Left lung (tissue), 14 donors: ENCODE measurements at regions of chr19 and their contacts with region 1.

Region 1: DNA sequence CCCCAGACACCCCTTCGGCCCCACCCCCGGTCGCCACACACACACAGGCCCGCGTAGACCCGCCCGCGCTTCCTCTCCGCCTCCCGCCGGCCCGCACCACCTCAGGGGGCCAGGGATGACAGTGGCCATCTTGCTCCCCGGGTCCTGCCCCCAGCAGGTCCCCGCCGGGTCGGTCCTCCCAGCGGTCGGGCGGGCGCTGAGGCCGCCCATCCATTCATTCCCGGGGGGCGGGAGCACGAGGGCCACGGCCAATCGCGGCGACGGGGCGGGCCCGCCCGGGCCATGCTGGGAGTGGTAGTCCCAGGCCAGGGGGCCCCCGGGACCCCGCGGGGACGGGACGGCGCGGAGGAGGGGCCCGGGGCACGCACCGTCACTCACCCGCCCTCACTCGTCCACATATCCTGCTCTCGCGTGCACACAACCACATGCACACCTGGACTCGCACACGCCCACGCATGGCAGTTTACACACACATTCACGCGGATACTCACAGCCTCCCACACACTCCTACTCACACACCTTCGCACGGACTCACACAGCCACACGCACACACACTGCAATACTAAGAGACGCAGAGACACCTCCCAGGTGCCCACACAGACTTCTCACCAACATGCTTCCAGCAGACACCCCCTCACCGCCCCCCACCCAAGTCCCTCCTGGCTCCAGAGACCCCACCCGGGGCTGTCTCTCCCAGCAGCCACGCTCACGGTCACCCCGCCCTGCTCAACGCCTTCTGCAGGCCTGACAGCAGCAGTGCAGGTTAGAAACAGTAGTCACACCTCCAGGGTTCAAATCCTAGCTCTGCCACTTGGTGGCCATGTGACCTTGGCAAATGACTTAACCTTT is at the start of gene DPF1:
- DNase-seq: peak in 2 of 4 donors; percentile 67 to 87
- ATAC-seq: peak; percentile 76
- H3K4me3 ChIP-seq: peak within 1 kb of the TSS; percentile 22 to 32
- H3K27ac ChIP-seq: no peak within 1 kb of the TSS
- H3K4me1 ChIP-seq: peaks cover 6 to 18% of the 10 kb centered on the region in 2 donors
- H3K27me3 ChIP-seq: peaks cover 45 to 96% of the 10 kb centered on the region in 2 donors
- CTCF ChIP-seq: no peak
- polyA plus RNA-seq, gene DPF1: 2.5 to 4.3 (median 3.4) TPM

Region 2: GRCh38 chr19:37906869-37907734 is 317.1 kb before region 1 on chr19 and contains the start of gene SIPA1L3:
- intact Hi-C with region 1: loop called in 1 of 2 experiments (anchors 10 kb)
- DNase-seq: peak; percentile 94 to 99 (median 96)
- ATAC-seq: peak; percentile 97
- H3K4me3 ChIP-seq: peak within 1 kb of the TSS; percentile 89 to 93
- H3K27ac ChIP-seq: peak within 1 kb of the TSS; percentile 60 to 80
- H3K4me1 ChIP-seq: peaks cover 12 to 22% of the 10 kb centered on the region in 2 donors
- H3K27me3 ChIP-seq: no peaks in the 10 kb centered on the region
- CTCF ChIP-seq: peak in 1 of 2 donors; percentile 17
- polyA plus RNA-seq, gene SIPA1L3: 22.7 to 32.4 (median 25.0) TPM